GM12878 (cell line): ENCODE measurements at regions of chr2 and their contacts with region 1.

Region 1: DNA sequence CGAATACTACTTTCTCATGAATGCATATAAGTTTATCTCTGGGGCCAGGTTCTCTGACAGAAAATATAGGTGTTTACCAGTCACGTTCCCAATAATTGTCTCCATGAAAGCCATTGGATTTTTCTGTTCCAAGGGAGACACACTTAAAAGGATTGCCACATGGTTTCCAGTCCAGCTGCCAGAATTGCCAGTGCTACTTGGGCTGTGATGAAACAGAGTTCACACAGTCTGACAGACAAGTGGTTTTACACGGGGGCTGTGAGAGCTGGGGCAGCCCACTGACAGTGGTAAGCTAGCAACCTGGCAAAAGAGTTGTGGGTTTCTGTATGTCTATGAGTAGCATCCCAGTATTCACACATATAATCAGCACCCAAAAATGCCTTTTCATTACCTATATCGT is 27.7 kb upstream of the ATRAID start:
- DNase-seq: no peak
- ATAC-seq: no peak
- H3K4me3 ChIP-seq: no peak overlapping the region
- H3K27ac ChIP-seq: no peak overlapping the region
- H3K4me1 ChIP-seq: peaks cover 4% of the 10 kb centered on the region; the same call in 1 of the 2 replicates
- H3K27me3 ChIP-seq: no peaks in the 10 kb centered on the region
- CTCF ChIP-seq: no peak
- EP300 ChIP-seq: no peak
- POLR2A ChIP-seq: no peak
- RAD21 ChIP-seq: no peak

Region 2: DNA sequence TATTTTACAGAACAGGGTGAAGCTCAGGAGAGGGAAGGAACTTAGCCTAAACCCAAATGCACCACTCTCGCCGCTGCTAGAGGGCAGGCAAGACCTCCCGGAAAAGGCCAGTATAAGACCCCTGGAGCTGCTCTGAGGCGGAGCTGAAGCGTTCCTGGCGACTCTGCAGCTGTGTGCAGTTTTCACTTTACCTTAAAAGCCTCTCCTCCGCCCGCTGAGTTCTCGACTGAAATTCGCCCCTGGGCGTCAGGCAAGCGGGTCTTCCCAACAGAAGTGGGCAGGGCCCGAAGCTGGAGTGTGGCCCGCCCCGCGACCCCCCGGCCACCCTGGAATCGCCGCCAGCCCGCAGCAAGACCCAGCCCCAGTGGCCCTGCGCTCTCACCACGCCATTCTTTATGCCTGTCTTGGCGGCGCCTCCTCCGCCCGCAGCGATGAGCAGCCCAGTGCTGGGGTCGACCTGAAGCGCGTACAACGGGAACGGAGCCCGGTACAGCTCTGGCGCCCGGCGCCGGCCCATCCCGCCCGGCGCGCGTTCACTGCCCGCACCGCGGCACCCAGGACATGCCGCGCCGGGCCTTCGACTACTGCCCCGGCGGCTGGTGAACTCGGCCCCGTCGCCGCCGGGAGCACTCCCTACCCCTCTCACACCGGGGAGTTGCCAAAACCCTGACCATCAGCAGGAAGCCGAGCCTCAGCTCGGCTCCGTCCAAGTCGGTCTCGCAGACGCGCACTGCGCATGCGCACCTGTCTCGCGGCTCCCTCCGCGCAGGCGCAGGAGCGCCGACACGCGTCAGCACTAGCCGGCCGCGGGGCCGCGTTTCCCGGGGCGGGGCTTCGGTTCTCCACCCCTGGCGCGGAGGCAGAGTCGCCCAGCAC is 50.0 kb before region 1 on chr2 and contains the start of gene PREB:
- CTCF ChIA-PET with region 1: interaction called, 5 read pairs
- POLR2A ChIA-PET with region 1: no interaction called
- RAD21 ChIA-PET with region 1: interaction called, 3 read pairs
- SMC1A ChIA-PET with region 1: no interaction called
- in situ Hi-C with region 1: no loop called
- intact Hi-C with region 1: loop called (anchors 5 kb)
- DNase-seq: peak; percentile 88
- ATAC-seq: peak; percentile 98
- H3K4me3 ChIP-seq: peak within 1 kb of the TSS; percentile 97
- H3K27ac ChIP-seq: peak within 1 kb of the TSS; percentile 90
- H3K4me1 ChIP-seq: peaks cover 8% of the 10 kb centered on the region
- H3K27me3 ChIP-seq: no peaks in the 10 kb centered on the region
- CTCF ChIP-seq: peak; percentile 38 to 43 (median 41); a peak in 4 of 6 replicates
- EP300 ChIP-seq: no peak
- POLR2A ChIP-seq: peak; percentile 89
- RAD21 ChIP-seq: peak; percentile 45; the same call in 1 of the 2 replicates
- polyA plus RNA-seq, gene PREB: 26.3 to 45.7 TPM

Region 3: GRCh38 chr2:27885234-27885633 is 701.1 kb after region 1 on chr2:
- CTCF ChIA-PET with region 1: no interaction called
- POLR2A ChIA-PET with region 1: no interaction called
- RAD21 ChIA-PET with region 1: no interaction called
- SMC1A ChIA-PET with region 1: no interaction called
- in situ Hi-C with region 1: no loop called
- intact Hi-C with region 1: no loop called
- DNase-seq: no peak
- ATAC-seq: no peak
- H3K4me3 ChIP-seq: no peak overlapping the region
- H3K27ac ChIP-seq: no peak overlapping the region
- H3K4me1 ChIP-seq: no peaks in the 10 kb centered on the region
- H3K27me3 ChIP-seq: no peaks in the 10 kb centered on the region
- CTCF ChIP-seq: no peak
- EP300 ChIP-seq: no peak
- POLR2A ChIP-seq: no peak
- RAD21 ChIP-seq: no peak